ENCODE measurements at regions of chr22 and their contacts with region 1.

Region 1: DNA sequence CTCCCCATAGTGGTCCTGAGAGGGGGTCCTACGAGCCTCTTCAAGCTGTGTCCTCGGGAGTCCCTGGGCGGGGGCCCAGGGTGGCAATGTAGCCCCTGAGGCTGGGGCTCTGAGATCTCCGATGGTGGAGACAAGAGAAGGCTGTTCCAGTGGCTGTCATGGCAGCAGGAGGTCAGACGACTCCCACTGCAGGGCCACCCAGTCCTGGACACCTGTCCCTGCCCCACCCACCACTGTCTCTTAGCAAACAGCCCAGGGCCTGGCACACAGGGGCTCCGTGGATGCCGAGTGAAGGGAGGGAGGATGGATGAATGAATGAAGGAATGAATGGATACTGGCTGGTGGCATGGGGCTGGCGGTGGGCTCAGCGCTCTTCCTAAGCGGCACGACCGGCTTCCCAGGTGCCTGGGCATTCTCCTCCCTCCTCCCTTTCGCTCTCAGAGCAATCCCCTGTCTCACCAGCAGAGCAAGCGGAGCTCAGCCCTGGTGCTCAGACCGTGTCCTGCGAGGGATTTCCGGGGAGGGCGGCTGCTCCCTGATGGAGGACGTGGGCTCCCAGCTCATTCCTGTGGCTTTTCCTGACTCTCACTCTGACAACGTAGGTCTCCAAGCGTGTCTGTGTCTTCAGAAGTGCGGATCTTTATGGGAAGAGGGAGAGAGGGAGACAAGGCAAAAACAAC is 1272.6 kb downstream of the BRD1 start:
- DNase-seq: no peak
- H3K4me3 ChIP-seq: no peak overlapping the region
- CTCF ChIP-seq: peak; percentile 15

Region 2: GRCh38 chr22:48450188-48450825 is 104.7 kb before region 1 on chr22:
- in situ Hi-C with region 1: loop called (anchors 5 kb)
- DNase-seq: no peak
- H3K4me3 ChIP-seq: no peak overlapping the region
- CTCF ChIP-seq: no peak

Region 3: GRCh38 chr22:48663297-48663696 is 108.3 kb after region 1 on chr22:
- in situ Hi-C with region 1: no loop called
- DNase-seq: no peak
- H3K4me3 ChIP-seq: no peak overlapping the region
- CTCF ChIP-seq: peak; percentile 31

Region 4: DNA sequence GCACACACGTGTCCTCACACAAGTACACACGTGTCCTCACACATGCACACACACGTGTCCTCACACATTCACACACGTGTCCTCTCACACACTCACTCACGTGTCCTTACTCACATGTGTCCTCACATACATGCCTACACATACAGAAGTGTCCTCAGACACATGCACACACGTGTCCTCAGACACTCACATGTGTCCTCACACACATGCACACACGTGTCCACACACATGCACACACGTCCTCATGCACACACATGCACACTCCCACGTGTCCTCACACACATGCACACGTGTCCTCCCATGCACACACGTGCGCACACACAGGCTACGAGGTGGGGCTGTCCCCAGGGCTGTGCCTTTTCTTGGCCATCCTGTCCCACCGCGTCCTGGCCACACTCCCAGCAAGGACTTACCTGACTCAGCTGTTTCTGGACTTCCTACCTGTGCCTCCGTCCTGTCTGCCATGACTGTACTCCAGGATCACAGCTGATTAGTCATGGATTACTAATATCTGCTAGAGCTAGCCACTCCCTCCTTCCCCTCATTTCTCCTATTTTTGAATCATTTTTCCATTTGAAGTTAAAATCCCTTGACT is 282.4 kb after region 1 on chr22:
- in situ Hi-C with region 1: no loop called
- DNase-seq: no peak
- H3K4me3 ChIP-seq: no peak overlapping the region
- CTCF ChIP-seq: no peak